Colonic mucosa (tissue), 4 donors: ENCODE measurements at regions of chr15 and their contacts with region 1.

Region 1: DNA sequence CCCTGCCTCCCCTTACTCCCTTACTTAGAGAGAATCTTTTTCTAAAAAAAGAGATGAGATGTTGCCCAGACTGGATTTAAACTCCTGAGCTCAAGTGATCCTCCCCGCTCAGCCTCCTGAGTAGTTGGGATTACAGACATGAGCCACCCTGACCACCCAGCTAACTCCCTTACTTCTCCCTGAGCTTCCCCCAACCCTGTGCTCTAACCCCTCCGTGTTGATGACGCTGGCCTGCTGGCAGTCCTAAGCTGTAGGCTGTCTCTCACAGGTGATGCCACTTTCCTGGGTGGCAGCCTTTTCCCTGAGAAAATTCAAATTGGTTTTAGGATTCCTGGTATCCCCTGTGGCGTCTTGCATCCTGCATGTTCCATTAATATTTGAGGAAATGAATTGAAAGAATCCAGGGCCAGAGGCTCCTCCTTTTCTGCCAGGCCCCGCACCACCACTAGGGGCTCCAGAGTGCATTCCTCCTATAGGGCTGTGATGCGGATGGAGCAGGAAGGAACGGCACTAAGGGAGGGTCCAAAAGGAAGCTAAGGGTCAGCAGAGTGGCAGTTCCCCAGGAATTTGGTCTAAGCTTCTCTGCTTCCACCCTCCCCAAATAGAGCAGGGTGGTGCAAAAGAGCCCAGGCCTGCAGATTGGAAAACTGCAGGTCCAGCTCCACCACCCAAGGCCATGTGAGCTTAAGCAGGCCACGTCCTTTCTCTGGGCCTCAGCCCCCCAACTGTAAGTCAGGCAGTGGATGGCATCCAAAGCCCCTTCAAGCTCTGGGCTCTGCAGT is 101.1 kb downstream of the DAPK2 start:
- DNase-seq: peak; percentile 87
- H3K4me3 ChIP-seq: no peak overlapping the region
- H3K27ac ChIP-seq: no peak overlapping the region
- H3K4me1 ChIP-seq: no peaks in the 10 kb centered on the region
- H3K27me3 ChIP-seq: no peaks in the 10 kb centered on the region
- CTCF ChIP-seq: peak; percentile 92

Region 2: GRCh38 chr15:63803106-63803886 is 141.9 kb before region 1 on chr15:
- intact Hi-C with region 1: no loop called
- DNase-seq: no peak
- H3K4me3 ChIP-seq: no peak overlapping the region
- H3K27ac ChIP-seq: no peak overlapping the region
- H3K4me1 ChIP-seq: no peaks in the 10 kb centered on the region
- H3K27me3 ChIP-seq: no peaks in the 10 kb centered on the region
- CTCF ChIP-seq: no peak

Region 3: DNA sequence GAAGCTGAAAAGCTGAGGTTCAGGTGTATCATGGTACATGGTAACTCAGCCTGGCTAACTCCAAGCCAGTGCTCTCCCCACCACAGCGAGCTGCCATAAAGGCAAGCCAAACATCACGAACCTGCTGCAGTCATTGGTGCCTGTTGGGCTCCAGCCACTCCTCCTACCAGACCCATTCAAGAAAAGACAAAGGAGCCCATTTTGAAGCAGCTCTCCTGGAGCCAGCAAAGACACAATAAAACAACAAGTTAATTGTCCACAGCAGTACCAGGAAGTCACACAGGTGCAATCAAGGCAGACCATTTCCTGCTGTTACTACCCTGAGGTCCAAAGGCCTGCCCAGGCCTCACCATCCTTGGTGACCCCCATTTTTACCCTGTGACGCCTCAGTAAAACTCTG is 23.5 kb after region 1 on chr15:
- intact Hi-C with region 1: loop called (anchors 2 kb)
- DNase-seq: peak; percentile 70
- H3K4me3 ChIP-seq: no peak overlapping the region
- H3K27ac ChIP-seq: peak overlapping the region; percentile 72
- H3K4me1 ChIP-seq: peaks cover 13% of the 10 kb centered on the region
- H3K27me3 ChIP-seq: no peaks in the 10 kb centered on the region
- CTCF ChIP-seq: no peak

Region 4: GRCh38 chr15:64046347-64047153 is 101.4 kb after region 1 on chr15 and contains the start of gene DAPK2:
- intact Hi-C with region 1: loop called (anchors 5 kb)
- DNase-seq: peak; percentile 78
- H3K4me3 ChIP-seq: peak within 1 kb of the TSS; percentile 66
- H3K27ac ChIP-seq: no peak within 1 kb of the TSS
- H3K4me1 ChIP-seq: peaks cover 12% of the 10 kb centered on the region
- H3K27me3 ChIP-seq: no peaks in the 10 kb centered on the region
- CTCF ChIP-seq: peak; percentile 78
- total RNA-seq, gene DAPK2: 23.7 to 26.5 TPM